Cardiac septum (tissue), 1 donor: ENCODE measurements at regions of chr2 and their contacts with region 1.

Region 1: GRCh38 chr2:96065381-96065930 is 30.7 kb upstream of the GPAT2 start:
- DNase-seq: peak; percentile 75

Region 2: GRCh38 chr2:96116879-96117697 is 51.6 kb after region 1 on chr2:
- intact Hi-C with region 1: loop called (anchors 10 kb)
- DNase-seq: no peak

Region 3: DNA sequence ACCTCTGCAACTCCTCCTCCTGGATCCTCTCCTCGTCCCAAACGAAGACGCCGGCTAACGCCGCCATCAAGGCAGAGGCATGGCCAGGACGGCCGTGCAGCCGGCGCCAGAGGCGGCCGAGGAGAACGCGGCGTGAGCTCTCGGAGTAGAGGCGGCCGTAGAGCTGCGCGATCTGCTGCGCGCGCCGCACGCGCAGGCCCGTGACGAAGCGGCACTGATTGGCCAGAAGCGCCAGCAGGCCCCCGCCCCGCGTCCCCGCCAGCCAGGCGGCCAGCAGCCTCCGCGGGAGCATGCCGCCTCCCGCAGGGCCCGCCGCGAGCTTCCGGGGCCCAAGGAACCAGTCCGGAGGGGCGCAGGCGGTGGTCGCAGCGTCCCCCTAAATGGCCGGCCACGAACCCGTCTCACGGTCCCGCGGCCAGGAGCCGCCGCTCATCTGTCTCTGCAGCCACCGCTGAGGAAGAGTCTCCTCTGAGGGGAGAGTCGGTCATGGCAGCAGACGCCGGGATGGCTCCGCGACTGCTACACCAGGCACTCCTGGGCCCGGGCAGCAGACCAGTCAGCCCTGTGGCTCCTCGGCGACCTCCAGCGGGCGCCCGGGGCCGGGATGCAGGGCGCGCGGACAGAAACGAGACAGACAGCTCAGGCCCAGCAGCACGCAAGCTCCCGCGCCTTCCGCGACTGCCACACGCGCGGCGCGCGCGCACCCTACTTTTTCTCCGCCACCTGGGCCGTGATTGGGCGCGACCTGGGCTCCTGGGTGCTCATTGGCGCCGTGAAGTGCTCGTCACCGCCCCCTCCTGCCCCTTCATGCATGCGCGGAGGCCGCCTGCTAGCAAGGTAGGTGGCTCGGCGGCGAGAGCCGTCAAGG is 142.9 kb after region 1 on chr2 and contains the start of gene STARD7:
- intact Hi-C with region 1: no loop called
- DNase-seq: peak; percentile 99
- total RNA-seq, gene STARD7: 142 TPM

Region 4: GRCh38 chr2:97645695-97646629 is 1580.5 kb after region 1 on chr2 and contains the start of gene COX5B:
- intact Hi-C with region 1: loop called (anchors 10 kb)
- DNase-seq: peak; percentile 100
- total RNA-seq, gene COX5B: 992 TPM

Region 5: DNA sequence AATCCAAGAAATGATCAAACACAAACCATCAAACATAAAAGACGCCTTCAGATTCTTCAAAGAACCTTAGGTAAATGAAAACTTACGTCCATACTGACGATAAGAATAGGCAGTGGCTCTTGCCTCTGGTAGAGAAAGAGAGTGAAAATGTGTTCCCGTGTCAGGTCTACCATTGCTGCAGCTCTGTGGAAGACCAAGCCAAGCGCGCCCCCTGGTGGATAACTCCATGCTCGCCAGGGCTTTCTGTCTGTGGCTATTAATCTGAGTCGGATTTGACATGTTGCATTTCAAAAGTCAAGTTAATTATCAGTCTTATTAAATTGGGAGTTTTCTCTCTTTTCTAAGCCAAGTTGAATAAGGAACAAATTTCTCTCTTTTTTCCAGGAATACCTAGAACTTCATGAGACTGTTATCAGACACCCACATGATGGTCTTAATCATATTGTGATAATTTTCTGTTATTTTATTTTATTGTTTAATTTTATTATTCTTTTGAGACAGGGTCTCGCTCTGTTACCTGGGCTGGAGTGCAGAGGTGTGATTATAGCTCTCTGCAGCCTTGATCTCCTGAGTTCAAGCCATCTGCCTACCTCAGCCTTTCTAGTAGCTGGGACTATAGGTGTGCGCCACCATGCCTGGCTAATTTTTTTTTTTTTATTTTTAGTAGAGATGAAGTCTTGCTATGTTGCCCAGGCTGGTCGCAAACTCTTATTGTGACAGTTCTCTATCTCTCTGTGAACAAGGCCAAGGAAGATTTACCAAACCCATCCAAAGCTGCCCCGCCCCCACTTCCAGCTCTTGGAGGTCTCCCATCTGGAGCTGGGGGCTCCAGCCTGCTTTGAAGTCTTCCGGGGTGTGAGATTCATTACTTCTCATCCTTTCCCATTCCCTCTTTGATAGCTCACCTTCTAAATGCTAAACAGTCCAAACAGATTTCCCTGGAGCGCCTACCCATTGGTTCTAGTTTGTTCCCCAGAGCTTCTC is 1632.1 kb after region 1 on chr2:
- intact Hi-C with region 1: loop called (anchors 10 kb)
- DNase-seq: peak; percentile 95